Sciatic nerve (tissue), 2 donors: ENCODE measurements at regions of chr5 and their contacts with region 1.

Region 1: DNA sequence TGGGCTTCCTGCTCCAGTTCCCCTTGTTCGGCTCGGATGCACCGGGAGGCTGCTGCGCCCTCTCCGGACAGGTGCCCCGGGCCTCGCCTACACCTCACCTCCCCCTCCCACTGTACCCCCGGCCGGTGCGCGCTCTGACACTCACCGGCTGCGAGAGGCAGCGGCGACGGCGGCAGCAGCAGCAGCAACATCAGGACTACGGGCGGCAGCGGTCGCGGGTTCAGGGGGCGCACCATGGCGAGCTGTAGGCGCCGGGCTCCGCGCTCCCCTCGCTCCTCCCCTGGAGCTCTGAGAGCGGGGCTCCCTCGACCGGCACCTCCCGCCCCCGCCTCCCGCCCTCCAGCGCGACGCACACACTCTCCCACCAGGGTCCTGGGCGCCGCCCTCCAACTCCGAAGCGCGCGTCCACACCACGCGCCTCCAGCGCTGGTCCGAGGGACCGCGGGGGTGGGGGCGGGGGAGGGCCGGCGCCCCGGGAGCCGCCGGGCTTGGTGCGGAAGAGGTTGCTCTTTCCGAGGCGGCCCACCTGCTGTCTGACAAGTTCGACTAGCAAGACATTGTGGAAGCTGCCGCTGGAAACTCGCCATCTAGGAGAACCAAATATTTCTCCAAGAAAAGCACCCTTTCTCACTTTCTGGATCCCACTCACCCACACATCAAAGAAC is at the start of gene GFRA3:
- DNase-seq: no peak
- ATAC-seq: peak; percentile 60
- total RNA-seq, gene GFRA3: 17.7 TPM

Region 2: GRCh38 chr5:138226910-138227309 is 47.4 kb before region 1 on chr5:
- intact Hi-C with region 1: loop called (anchors 10 kb)
- DNase-seq: no peak
- ATAC-seq: no peak